ENCODE measurements at regions of chr4 and their contacts with region 1.

Region 1: GRCh38 chr4:82428969-82429727 is 1.1 kb downstream of the HNRNPDL start:
- DNase-seq: peak; percentile 86 to 95
- H3K4me3 ChIP-seq: peak overlapping the region; percentile 93 to 94
- H3K27ac ChIP-seq: peak overlapping the region; percentile 94 to 95
- H3K4me1 ChIP-seq: peaks cover 0 to 50% (median 32%) of the 10 kb centered on the region in 4 donors
- H3K27me3 ChIP-seq: no peaks in the 10 kb centered on the region
- CTCF ChIP-seq: peak; percentile 95 to 96

Region 2: GRCh38 chr4:82352913-82353366 is 76.2 kb before region 1 on chr4:
- intact Hi-C with region 1: no loop called
- DNase-seq: no peak
- H3K4me3 ChIP-seq: no peak overlapping the region
- H3K27ac ChIP-seq: no peak overlapping the region
- H3K4me1 ChIP-seq: peaks cover 0 to 13% (median 1%) of the 10 kb centered on the region in 4 donors
- H3K27me3 ChIP-seq: no peaks in the 10 kb centered on the region
- CTCF ChIP-seq: no peak

Region 3: GRCh38 chr4:82373816-82374625 is 55.1 kb before region 1 on chr4 and contains the start of gene HNRNPD:
- intact Hi-C with region 1: loop called (anchors 1 kb)
- DNase-seq: peak; percentile 99
- H3K4me3 ChIP-seq: peak within 1 kb of the TSS; percentile 85 to 98
- H3K27ac ChIP-seq: peak within 1 kb of the TSS; percentile 99
- H3K4me1 ChIP-seq: peaks cover 5 to 52% (median 26%) of the 10 kb centered on the region in 4 donors
- H3K27me3 ChIP-seq: no peaks in the 10 kb centered on the region
- CTCF ChIP-seq: peak in 1 of 2 experiments; percentile 7

Region 4: GRCh38 chr4:82900331-82901128 is 471.4 kb after region 1 on chr4 and contains the start of gene THAP9:
- intact Hi-C with region 1: loop called (anchors 2 kb)
- DNase-seq: peak; percentile 99
- H3K4me3 ChIP-seq: peak within 1 kb of the TSS; percentile 60 to 68
- H3K27ac ChIP-seq: peak within 1 kb of the TSS; percentile 91 to 93
- H3K4me1 ChIP-seq: peaks cover 0 to 41% (median 19%) of the 10 kb centered on the region in 4 donors
- H3K27me3 ChIP-seq: no peaks in the 10 kb centered on the region
- CTCF ChIP-seq: no peak

Region 5: DNA sequence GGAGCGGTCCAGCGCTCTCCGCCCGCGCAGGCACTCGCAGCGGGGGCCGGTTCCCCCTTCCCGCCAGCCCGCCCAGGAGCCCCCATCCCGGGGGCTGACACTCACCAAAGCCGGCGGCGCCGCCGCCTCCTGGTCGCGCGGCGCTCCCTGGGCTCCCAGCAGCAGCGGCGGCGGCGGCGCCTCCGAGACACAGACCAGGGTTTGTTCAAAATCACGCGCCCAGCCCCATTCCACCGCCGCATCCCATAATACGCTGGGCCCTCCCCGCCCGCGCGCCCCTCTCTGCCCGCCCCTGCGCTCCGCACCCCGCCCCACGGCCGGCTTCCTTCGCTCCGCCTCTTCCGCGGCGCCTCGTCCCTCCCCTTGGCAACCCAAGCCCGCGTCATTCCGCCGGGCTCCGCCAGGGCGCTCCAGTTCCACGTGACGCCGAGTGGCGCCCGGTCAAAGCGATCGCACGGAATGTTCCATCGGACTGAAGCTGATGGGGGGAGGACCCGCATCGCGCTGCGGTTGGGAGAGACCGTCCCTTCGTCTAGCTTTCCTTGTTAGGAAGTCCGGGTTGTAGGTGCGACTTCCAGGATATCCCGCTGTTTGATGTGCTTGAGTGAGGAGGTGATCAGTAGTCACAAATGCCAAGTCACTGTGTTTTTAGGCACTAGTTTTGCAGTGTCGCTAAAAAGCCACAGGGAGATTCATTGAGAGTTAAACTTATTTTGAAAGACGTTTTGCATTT is 583.7 kb after region 1 on chr4:
- intact Hi-C with region 1: loop called (anchors 5 kb)
- DNase-seq: peak; percentile 94 to 98
- H3K4me3 ChIP-seq: peak overlapping the region; percentile 74 to 75
- H3K27ac ChIP-seq: peak overlapping the region; percentile 75 to 87
- H3K4me1 ChIP-seq: peaks cover 0 to 28% (median 19%) of the 10 kb centered on the region in 4 donors
- H3K27me3 ChIP-seq: no peaks in the 10 kb centered on the region
- CTCF ChIP-seq: peak; percentile 71 to 76

Region 6: GRCh38 chr4:83320548-83320947 is 891.4 kb after region 1 on chr4:
- intact Hi-C with region 1: no loop called
- DNase-seq: peak; percentile 74 to 81
- H3K4me3 ChIP-seq: no peak overlapping the region
- H3K27ac ChIP-seq: no peak overlapping the region
- H3K4me1 ChIP-seq: no peaks in the 10 kb centered on the region
- H3K27me3 ChIP-seq: no peaks in the 10 kb centered on the region
- CTCF ChIP-seq: no peak